ENCODE measurements at regions of chr5 and their contacts with region 1.

Region 1: GRCh38 chr5:172770675-172771438 is at the start of gene DUSP1:
- DNase-seq: peak; percentile 99 to 100
- ATAC-seq: peak; percentile 57
- total RNA-seq, gene DUSP1: 148 to 242 TPM

Region 2: GRCh38 chr5:172833686-172834414 is 63.0 kb after region 1 on chr5 and contains the start of gene ERGIC1:
- intact Hi-C with region 1: loop called in 1 of 2 experiments (anchors 10 kb)
- DNase-seq: peak; percentile 90 to 91
- ATAC-seq: peak; percentile 71
- total RNA-seq, gene ERGIC1: 201 to 223 TPM

Region 3: DNA sequence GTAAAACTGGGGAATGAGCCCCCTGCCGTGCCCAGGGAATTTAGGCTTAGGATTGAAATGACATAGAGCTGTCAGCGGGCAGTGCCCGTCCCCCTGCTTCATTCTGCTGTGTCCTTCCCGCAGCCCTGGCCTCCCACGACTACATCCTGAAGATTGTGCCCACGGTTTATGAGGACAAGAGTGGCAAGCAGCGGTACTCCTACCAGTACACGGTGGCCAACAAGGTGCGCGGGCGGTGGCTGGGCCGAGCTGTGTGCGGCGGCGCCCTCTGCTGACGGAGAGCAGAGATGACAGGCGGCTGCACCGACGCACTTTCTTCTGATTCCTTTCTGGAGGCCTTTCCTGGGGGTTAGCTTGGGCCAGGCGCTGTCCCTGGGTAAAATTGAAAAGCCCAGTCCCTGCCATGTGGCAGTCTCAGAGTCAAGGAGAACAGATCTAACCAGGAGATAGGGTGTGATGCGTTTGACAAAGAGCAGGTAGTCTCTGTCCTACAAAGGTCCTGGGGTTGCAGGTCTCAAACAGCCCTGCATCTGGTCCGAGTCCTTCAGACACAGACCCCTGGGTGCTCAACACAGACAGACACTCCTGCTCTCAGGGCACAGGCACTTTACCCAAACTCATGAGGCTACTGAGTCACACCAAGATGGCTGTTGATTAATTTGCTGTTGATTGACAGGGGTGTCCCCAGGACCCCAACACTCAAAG is 161.6 kb after region 1 on chr5:
- intact Hi-C with region 1: no loop called
- DNase-seq: peak; percentile 58 to 79
- ATAC-seq: peak; percentile 94

Measured in left colon (tissue), 2 donors.